Sigmoid colon (tissue), 7 donors: ENCODE measurements at regions of chr9 and their contacts with region 1.

Region 1: GRCh38 chr9:806285-807156 is 35.0 kb upstream of the DMRT1 start:
- DNase-seq: no peak
- H3K4me3 ChIP-seq: no peak overlapping the region
- H3K27ac ChIP-seq: no peak overlapping the region
- H3K4me1 ChIP-seq: peaks cover 0 to 13% (median 11%) of the 10 kb centered on the region in 4 donors
- H3K27me3 ChIP-seq: no peaks in the 10 kb centered on the region
- CTCF ChIP-seq: peak; percentile 18 to 61 (median 42)
- EP300 ChIP-seq: no peak
- POLR2A ChIP-seq: no peak

Region 2: GRCh38 chr9:613771-614347 is 192.7 kb before region 1 on chr9:
- intact Hi-C with region 1: loop called (anchors 2 kb)
- DNase-seq: peak; percentile 92
- H3K4me3 ChIP-seq: no peak overlapping the region
- H3K27ac ChIP-seq: peak overlapping the region; percentile 61 to 79 (median 72)
- H3K4me1 ChIP-seq: peaks cover 0 to 46% (median 34%) of the 10 kb centered on the region in 4 donors
- H3K27me3 ChIP-seq: no peaks in the 10 kb centered on the region
- CTCF ChIP-seq: peak; percentile 86 to 96 (median 90)
- EP300 ChIP-seq: no peak
- POLR2A ChIP-seq: no peak